H1 (cell line): ENCODE measurements at regions of chr22 and their contacts with region 1.

Region 1: DNA sequence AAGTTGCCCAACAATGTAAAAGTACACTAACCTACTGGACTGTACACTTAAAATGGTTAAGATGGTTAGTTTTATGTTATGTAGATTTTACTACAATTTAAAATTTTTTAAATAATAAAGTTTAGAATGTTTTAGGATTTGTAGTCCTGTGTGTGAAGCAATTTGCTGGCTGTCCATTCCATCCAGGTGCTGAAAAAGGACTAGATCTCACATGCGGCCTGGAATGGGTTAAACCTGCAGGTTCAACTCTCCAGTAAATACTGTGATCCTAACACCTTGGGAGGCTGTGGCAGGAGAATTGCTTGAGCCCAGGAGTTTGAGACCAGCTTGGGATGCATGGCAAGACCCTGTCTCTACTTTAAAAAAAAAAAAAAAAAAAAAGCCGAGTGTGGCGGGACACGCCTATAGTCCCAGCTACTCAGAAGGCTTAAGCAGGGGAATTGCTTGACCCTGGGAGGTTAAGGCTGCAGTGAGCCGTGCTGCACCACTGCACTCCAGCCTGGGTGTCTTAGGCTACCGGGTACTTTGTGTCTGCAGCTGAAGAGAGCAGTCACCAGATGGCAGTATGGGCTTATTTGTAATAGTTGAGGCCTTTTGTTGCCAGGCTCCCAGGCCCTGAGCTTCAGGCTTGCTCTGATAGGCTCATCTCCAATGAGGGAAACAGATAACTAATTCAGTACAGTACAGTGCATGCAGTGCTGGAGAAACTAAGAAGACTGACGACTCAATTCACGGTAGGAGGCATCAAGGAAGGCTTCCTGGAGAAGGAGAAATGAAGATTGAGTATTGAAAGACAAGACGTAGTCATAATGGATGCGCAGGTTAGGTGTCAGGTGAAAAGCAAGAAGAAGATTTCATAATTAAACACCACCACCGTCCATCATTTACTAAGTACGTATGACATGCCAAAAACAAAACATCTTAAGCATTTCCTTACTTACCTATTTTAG is 64.7 kb upstream of the ASPHD2 start:
- DNase-seq: peak; percentile 63 to 70
- H3K4me3 ChIP-seq: no peak overlapping the region
- H3K27ac ChIP-seq: no peak overlapping the region
- H3K4me1 ChIP-seq: peaks cover 0 to 4% (median under 1%) of the 10 kb centered on the region in 4 experiments; a peak in 3 of 7 replicates
- H3K27me3 ChIP-seq: no peaks in the 10 kb centered on the region; a peak in 2 of 7 replicates
- CTCF ChIP-seq: peak; percentile 63 to 91 (median 81)
- EP300 ChIP-seq: no peak
- POLR2A ChIP-seq: no peak
- RAD21 ChIP-seq: peak; percentile 84 to 93

Region 2: DNA sequence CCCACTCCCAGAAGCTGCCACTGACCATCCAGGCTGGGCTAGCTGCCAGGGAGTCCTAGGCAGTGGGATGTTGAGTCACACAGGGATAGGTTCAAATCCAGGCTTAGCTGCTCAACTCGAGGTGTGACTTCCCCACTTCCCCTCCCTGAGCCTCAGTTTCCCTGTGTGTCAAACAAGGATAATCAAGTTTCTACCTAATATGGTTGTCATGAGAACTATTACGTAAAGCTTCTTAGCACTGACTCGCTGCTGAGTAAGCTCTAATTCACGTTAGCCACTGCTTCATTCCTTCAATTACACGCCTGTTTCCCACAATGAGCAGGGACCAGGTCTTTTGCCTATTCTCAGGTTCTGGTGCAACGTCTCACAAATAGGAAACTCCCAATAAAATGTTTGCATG is 127.3 kb before region 1 on chr22:
- CTCF ChIA-PET with region 1: no interaction called
- POLR2A ChIA-PET with region 1: no interaction called
- DNase-seq: no peak
- H3K4me3 ChIP-seq: no peak overlapping the region
- H3K27ac ChIP-seq: no peak overlapping the region
- H3K4me1 ChIP-seq: no peaks in the 10 kb centered on the region
- H3K27me3 ChIP-seq: no peaks in the 10 kb centered on the region; a peak in 1 of 7 replicates
- CTCF ChIP-seq: no peak
- EP300 ChIP-seq: no peak
- POLR2A ChIP-seq: no peak
- RAD21 ChIP-seq: no peak

Region 3: DNA sequence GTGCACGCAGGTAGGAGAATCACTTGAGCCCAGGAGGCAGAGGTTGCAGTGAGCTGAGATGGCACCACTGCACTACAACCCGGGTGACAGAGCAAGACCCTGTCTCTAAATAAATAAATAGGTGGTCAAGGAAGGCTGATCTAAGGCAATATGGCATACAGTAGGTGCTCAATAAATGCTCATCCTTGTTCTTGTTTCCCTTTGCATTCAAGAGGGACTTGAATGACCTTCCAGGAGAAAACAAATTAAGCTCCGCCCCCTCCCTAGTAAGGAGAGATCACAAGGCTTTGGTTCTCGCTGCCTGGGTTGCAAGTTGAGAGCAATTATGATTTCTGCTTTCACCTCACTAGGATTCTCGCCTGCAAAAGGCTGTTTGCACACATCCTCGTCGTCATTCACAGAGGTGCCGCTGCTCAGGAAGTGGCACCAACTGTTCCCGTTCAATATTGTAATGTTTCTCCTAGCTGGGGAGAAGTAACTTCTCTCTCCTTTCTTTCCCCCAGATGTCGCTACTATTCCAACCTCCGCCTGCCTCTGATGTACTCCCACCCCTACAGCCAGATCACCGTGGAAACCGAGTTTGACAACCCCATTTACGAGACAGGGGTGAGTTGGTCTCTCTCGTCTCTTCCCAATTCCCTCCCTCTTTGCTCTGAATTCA is 13.0 kb after region 1 on chr22:
- CTCF ChIA-PET with region 1: interaction called, 55 read pairs
- POLR2A ChIA-PET with region 1: interaction called, 4 read pairs
- DNase-seq: no peak
- H3K4me3 ChIP-seq: peak overlapping the region in 2 of 4 experiments; percentile 10 to 34; a peak in 2 of 8 replicates
- H3K27ac ChIP-seq: no peak overlapping the region
- H3K4me1 ChIP-seq: peaks cover 0 to 4% (median 0%) of the 10 kb centered on the region in 4 experiments; a peak in 1 of 7 replicates
- H3K27me3 ChIP-seq: no peaks in the 10 kb centered on the region
- CTCF ChIP-seq: peak in 2 of 3 experiments; percentile 29 to 32; a peak in 2 of 4 replicates
- EP300 ChIP-seq: no peak
- POLR2A ChIP-seq: no peak
- RAD21 ChIP-seq: peak; percentile 55 to 62

Region 4: GRCh38 chr22:26385164-26385563 is 20.8 kb after region 1 on chr22:
- CTCF ChIA-PET with region 1: interaction called, 55 read pairs
- POLR2A ChIA-PET with region 1: interaction called, 5 read pairs
- DNase-seq: no peak
- H3K4me3 ChIP-seq: no peak overlapping the region
- H3K27ac ChIP-seq: no peak overlapping the region
- H3K4me1 ChIP-seq: peaks cover 0 to 5% (median 0%) of the 10 kb centered on the region in 4 experiments; a peak in 2 of 7 replicates
- H3K27me3 ChIP-seq: no peaks in the 10 kb centered on the region
- CTCF ChIP-seq: no peak
- EP300 ChIP-seq: no peak
- POLR2A ChIP-seq: no peak
- RAD21 ChIP-seq: no peak

Region 5: GRCh38 chr22:26445577-26446275 is 81.4 kb after region 1 on chr22:
- CTCF ChIA-PET with region 1: interaction called, 21 read pairs
- POLR2A ChIA-PET with region 1: interaction called, 4 read pairs
- DNase-seq: no peak
- H3K4me3 ChIP-seq: no peak overlapping the region
- H3K27ac ChIP-seq: no peak overlapping the region
- H3K4me1 ChIP-seq: no peaks in the 10 kb centered on the region
- H3K27me3 ChIP-seq: no peaks in the 10 kb centered on the region
- CTCF ChIP-seq: no peak
- EP300 ChIP-seq: no peak
- POLR2A ChIP-seq: no peak
- RAD21 ChIP-seq: no peak

Region 6: DNA sequence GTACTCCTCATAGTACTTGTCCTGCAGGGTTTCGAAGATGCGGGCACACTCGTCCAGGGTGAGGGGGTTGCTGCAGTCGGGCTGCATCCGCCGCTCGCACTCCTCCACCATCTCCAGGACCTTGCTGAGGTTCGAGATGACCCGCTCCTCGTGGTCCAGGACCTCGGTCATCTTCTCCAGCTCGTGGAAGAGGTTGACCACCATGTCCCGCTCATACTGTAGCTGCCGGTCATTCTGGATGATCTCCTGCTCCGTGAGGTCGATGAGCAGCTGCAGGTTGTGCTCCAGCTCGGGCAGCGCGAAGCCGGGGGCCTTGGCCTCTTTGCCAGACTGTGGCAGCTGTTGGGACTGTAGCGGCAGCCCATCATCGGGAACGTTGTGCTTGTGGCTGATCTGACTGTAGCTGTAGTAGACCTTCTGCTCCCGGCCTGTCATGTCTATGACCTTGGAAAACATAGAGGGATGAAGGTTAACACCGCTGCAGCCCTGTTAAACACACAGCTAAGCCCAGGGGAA is 134.9 kb after region 1 on chr22:
- CTCF ChIA-PET with region 1: no interaction called
- POLR2A ChIA-PET with region 1: no interaction called
- DNase-seq: no peak
- H3K4me3 ChIP-seq: no peak overlapping the region
- H3K27ac ChIP-seq: no peak overlapping the region
- H3K4me1 ChIP-seq: peaks cover 0 to 4% (median 2%) of the 10 kb centered on the region in 4 experiments; a peak in 3 of 7 replicates
- H3K27me3 ChIP-seq: no peaks in the 10 kb centered on the region
- CTCF ChIP-seq: no peak
- EP300 ChIP-seq: no peak
- POLR2A ChIP-seq: no peak
- RAD21 ChIP-seq: no peak